ENCODE measurements at regions of chr11 and their contacts with region 1.

Region 1: GRCh38 chr11:72722050-72722748 is 30.0 kb downstream of the ARAP1 start:
- DNase-seq: peak; percentile 87 to 97
- ATAC-seq: peak; percentile 95 to 97
- H3K4me3 ChIP-seq: peak overlapping the region; percentile 45
- H3K27ac ChIP-seq: peak overlapping the region; percentile 94 to 97
- H3K4me1 ChIP-seq: peaks cover 35% of the 10 kb centered on the region
- CTCF ChIP-seq: no peak
- EP300 ChIP-seq: no peak
- POLR2A ChIP-seq: peak; percentile 54
- RAD21 ChIP-seq: no peak

Region 2: GRCh38 chr11:72745511-72746216 is 23.5 kb after region 1 on chr11:
- CTCF ChIA-PET with region 1: interaction called, 16 read pairs
- POLR2A ChIA-PET with region 1: no interaction called
- DNase-seq: no peak
- ATAC-seq: no peak
- H3K4me3 ChIP-seq: no peak overlapping the region
- H3K27ac ChIP-seq: no peak overlapping the region
- H3K4me1 ChIP-seq: peaks cover 15% of the 10 kb centered on the region; the same call in 1 of the 3 replicates
- CTCF ChIP-seq: no peak
- EP300 ChIP-seq: no peak
- POLR2A ChIP-seq: no peak
- RAD21 ChIP-seq: no peak

Region 3: GRCh38 chr11:72772978-72773690 is 50.9 kb after region 1 on chr11:
- CTCF ChIA-PET with region 1: interaction called, 20 read pairs
- POLR2A ChIA-PET with region 1: no interaction called
- DNase-seq: no peak
- ATAC-seq: peak; percentile 12 to 28; a peak in 2 of 6 replicates
- H3K4me3 ChIP-seq: no peak overlapping the region
- H3K27ac ChIP-seq: no peak overlapping the region
- H3K4me1 ChIP-seq: peaks cover 11% of the 10 kb centered on the region
- CTCF ChIP-seq: no peak
- EP300 ChIP-seq: no peak
- POLR2A ChIP-seq: no peak
- RAD21 ChIP-seq: no peak

Region 4: DNA sequence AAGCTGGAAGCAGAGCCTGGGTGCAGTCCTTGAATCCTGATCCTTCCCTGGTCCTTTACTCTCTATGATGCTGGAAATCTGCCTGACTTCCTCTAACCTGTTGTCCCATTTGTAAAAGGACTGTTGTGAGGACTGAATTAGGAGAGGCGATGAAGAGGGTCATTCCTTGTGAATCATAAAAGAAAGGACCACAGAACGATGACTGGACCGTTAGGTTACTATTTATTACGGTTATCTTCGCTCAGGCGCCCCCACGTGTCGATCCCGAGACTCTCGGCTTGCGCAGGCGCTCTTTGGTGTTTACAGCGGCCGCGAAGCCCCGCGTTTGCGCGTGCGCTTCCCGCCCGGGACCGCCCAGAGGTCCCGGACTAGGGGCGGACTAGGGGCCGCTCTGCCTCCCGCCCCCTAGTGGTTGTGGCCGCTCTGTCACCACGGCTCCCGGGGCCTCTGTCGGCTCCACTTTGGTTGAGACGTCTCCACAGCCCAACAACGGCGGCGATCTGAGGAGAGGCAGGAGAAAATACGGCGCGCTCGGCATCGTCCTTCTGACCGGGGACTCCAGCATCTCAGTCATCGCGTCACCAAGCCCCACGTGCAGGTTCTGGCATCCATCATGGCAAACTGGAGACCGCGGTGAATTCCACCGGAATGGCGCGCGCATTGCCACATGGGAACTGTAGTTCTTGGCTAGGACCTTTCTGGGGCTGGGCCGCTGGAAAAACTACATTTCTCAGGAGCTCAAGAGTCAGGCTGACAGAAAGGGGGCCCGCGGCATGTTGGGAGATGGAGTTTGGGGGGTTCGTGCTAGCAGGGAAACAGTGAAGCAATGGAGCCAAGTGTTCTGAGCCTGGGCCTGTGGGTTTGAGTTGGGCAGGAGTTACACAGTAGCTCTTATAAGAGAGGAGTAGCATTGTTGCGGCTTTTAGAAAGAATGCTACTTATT is 71.5 kb after region 1 on chr11 and contains the start of gene STARD10:
- CTCF ChIA-PET with region 1: interaction called, 162 read pairs
- POLR2A ChIA-PET with region 1: interaction called, 8 read pairs
- DNase-seq: peak; percentile 94
- ATAC-seq: peak; percentile 93 to 97
- H3K4me3 ChIP-seq: peak within 1 kb of the TSS; percentile 57
- H3K27ac ChIP-seq: peak within 1 kb of the TSS; percentile 93 to 95
- H3K4me1 ChIP-seq: peaks cover 14% of the 10 kb centered on the region
- CTCF ChIP-seq: peak; percentile 95
- EP300 ChIP-seq: no peak
- POLR2A ChIP-seq: peak; percentile 48
- RAD21 ChIP-seq: peak; percentile 51 to 74
- polyA plus RNA-seq, gene STARD10: 21.2 and 25.0 TPM in 2 replicates

Region 5: GRCh38 chr11:72821883-72822799 is 99.9 kb after region 1 on chr11:
- CTCF ChIA-PET with region 1: interaction called, 58 read pairs
- POLR2A ChIA-PET with region 1: no interaction called
- DNase-seq: peak; percentile 91 to 94
- ATAC-seq: peak; percentile 70 to 91
- H3K4me3 ChIP-seq: peak overlapping the region; percentile 52
- H3K27ac ChIP-seq: peak overlapping the region; percentile 86 to 92
- H3K4me1 ChIP-seq: peaks cover 7% of the 10 kb centered on the region
- CTCF ChIP-seq: no peak
- EP300 ChIP-seq: no peak
- POLR2A ChIP-seq: peak; percentile 86
- RAD21 ChIP-seq: peak in 1 of 2 experiments; percentile 25; a peak in 1 of 5 replicates

Measured in A549 (cell line).